Natural killer cell (primary cell): ENCODE measurements at regions of chr22 and their contacts with region 1.

Region 1: GRCh38 chr22:43187171-43188099 is 501 bp upstream of the TTLL12 start:
- DNase-seq: peak; percentile 94 to 99
- ATAC-seq: peak; percentile 87 to 94 (median 89)
- H3K4me3 ChIP-seq: peak overlapping the region; percentile 36
- H3K4me3 Mint-ChIP-seq: peak overlapping the region; percentile 79
- H3K27ac ChIP-seq: peak overlapping the region; percentile 85
- H3K27ac Mint-ChIP-seq: peak overlapping the region; percentile 91 to 93
- H3K4me1 ChIP-seq: peaks cover 19% of the 10 kb centered on the region
- H3K4me1 Mint-ChIP-seq: peaks cover 4 to 12% of the 10 kb centered on the region in 2 donors
- H3K27me3 ChIP-seq: no peaks in the 10 kb centered on the region
- H3K27me3 Mint-ChIP-seq: no peaks in the 10 kb centered on the region
- CTCF ChIP-seq: peak; percentile 51

Region 2: GRCh38 chr22:43151251-43152002 is 36.0 kb before region 1 on chr22 and contains the start of gene TSPO:
- intact Hi-C with region 1: loop called (anchors 5 kb)
- DNase-seq: peak; percentile 56 to 72
- ATAC-seq: peak; percentile 76 to 79 (median 78)
- H3K4me3 ChIP-seq: peak within 1 kb of the TSS; percentile 76
- H3K4me3 Mint-ChIP-seq: peak within 1 kb of the TSS; percentile 93
- H3K27ac ChIP-seq: peak within 1 kb of the TSS; percentile 68
- H3K27ac Mint-ChIP-seq: peak within 1 kb of the TSS; percentile 81 to 90
- H3K4me1 ChIP-seq: peaks cover 67% of the 10 kb centered on the region
- H3K4me1 Mint-ChIP-seq: peaks cover 31 to 33% of the 10 kb centered on the region in 2 donors
- H3K27me3 ChIP-seq: no peaks in the 10 kb centered on the region
- H3K27me3 Mint-ChIP-seq: no peaks in the 10 kb centered on the region
- CTCF ChIP-seq: no peak
- total RNA-seq, gene TSPO: 52.1 to 81.7 (median 59.3) TPM

Region 3: DNA sequence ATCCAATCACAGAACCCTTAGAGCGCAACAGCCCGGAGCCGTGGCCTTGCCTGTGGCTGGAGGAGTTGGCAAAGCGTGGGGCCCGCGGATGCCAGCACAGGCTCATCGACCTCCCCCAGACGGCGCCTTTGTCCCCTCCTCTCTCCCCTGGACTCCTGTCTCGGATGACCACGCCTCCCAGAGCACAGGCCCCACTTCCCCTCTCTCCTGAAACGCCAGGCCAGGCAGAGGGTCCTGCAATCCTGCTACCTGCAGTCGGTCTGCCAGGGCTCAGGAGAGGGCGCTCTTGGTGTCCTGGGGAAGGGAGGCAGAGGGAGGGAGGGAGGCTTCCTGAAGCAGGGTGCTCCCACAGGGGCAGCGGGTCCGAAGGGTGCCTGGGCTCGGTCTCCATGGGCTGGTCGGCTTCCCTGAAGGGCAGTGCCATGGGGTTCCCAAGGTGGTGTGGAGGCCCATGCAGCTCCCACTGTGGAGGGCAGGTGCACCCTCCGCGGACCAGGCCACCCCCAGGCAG is 16.1 kb after region 1 on chr22:
- intact Hi-C with region 1: no loop called
- DNase-seq: no peak
- ATAC-seq: no peak
- H3K4me3 ChIP-seq: no peak overlapping the region
- H3K4me3 Mint-ChIP-seq: no peak overlapping the region
- H3K27ac ChIP-seq: no peak overlapping the region
- H3K27ac Mint-ChIP-seq: peak overlapping the region in 1 of 2 donors; percentile 31
- H3K4me1 ChIP-seq: peaks cover 22% of the 10 kb centered on the region
- H3K4me1 Mint-ChIP-seq: peaks cover 0 to 21% of the 10 kb centered on the region in 2 donors
- H3K27me3 ChIP-seq: no peaks in the 10 kb centered on the region
- H3K27me3 Mint-ChIP-seq: peaks cover 0 to 7% of the 10 kb centered on the region in 2 donors
- CTCF ChIP-seq: no peak